Common myeloid progenitor, CD34-positive (primary cell): ENCODE measurements at regions of chr11 and their contacts with region 1.

Region 1: GRCh38 chr11:2420502-2421225 is 20.1 kb downstream of the TSSC4 start:
- DNase-seq: peak; percentile 71 to 84 (median 81)
- H3K4me3 ChIP-seq: no peak overlapping the region
- H3K27ac ChIP-seq: no peak overlapping the region
- H3K4me1 ChIP-seq: peaks cover 0 to 10% (median 9%) of the 10 kb centered on the region in 4 experiments
- H3K27me3 ChIP-seq: no peaks in the 10 kb centered on the region

Region 2: GRCh38 chr11:2166091-2166851 is 254.4 kb before region 1 on chr11:
- CTCF ChIA-PET with region 1: interaction called, 45 read pairs
- POLR2A ChIA-PET with region 1: interaction called, 3 read pairs
- DNase-seq: peak; percentile 28 to 51 (median 42)
- H3K4me3 ChIP-seq: peak overlapping the region in 1 of 7 experiments; percentile 26
- H3K27ac ChIP-seq: no peak overlapping the region
- H3K4me1 ChIP-seq: peaks cover 0 to 7% (median 3%) of the 10 kb centered on the region in 4 experiments
- H3K27me3 ChIP-seq: peaks cover 0 to 35% (median 5%) of the 10 kb centered on the region in 5 experiments

Region 3: DNA sequence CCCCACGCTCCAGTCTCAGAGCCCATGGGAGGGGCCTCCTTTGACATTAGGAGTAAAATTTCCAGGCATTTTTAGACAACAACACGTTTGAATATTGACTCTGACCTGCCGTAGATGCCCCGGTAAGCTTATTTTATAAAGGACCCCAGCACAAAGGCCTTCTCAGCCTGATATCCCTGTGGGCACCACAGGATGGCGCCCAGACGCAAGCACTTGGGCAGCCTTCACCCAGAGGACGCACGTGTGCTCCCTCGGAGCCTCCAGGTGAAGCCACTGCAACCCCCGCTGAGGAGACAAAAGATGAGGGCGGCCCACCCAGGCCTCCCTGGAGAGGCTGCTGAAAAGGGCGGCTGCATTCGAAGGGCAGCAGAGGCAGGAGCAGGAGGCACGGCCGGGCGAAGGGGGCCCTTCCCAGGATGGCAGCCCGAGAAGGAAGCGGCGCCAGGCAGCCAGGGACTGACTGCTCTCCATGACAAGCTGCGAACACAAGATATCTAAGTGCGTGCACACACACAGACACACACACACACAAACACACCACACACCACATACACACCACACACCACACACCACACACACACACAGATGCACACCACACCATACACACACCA is 233.9 kb before region 1 on chr11:
- CTCF ChIA-PET with region 1: interaction called, 82 read pairs
- POLR2A ChIA-PET with region 1: no interaction called
- DNase-seq: peak; percentile 84 to 90 (median 89)
- H3K4me3 ChIP-seq: peak overlapping the region in 1 of 7 experiments; percentile 40
- H3K27ac ChIP-seq: no peak overlapping the region
- H3K4me1 ChIP-seq: peaks cover 5 to 41% (median 24%) of the 10 kb centered on the region in 4 experiments
- H3K27me3 ChIP-seq: no peaks in the 10 kb centered on the region

Region 4: GRCh38 chr11:2196970-2197770 is 223.5 kb before region 1 on chr11:
- CTCF ChIA-PET with region 1: interaction called, 42 read pairs
- POLR2A ChIA-PET with region 1: no interaction called
- DNase-seq: peak; percentile 62 to 76 (median 73)
- H3K4me3 ChIP-seq: no peak overlapping the region
- H3K27ac ChIP-seq: no peak overlapping the region
- H3K4me1 ChIP-seq: peaks cover 0 to 27% (median 14%) of the 10 kb centered on the region in 4 experiments
- H3K27me3 ChIP-seq: peaks cover 0 to 2% (median 0%) of the 10 kb centered on the region in 5 experiments

Region 5: GRCh38 chr11:2400069-2400760 is 20.4 kb before region 1 on chr11 and contains the start of gene TSSC4:
- CTCF ChIA-PET with region 1: interaction called, 73 read pairs
- POLR2A ChIA-PET with region 1: interaction called, 3 read pairs
- DNase-seq: peak; percentile 100
- H3K4me3 ChIP-seq: peak within 1 kb of the TSS; percentile 90 to 100 (median 99)
- H3K27ac ChIP-seq: peak within 1 kb of the TSS; percentile 96 to 97
- H3K4me1 ChIP-seq: peaks cover 0 to 26% (median 25%) of the 10 kb centered on the region in 4 experiments
- H3K27me3 ChIP-seq: no peaks in the 10 kb centered on the region

Region 6: GRCh38 chr11:2409611-2410468 is 10.8 kb before region 1 on chr11:
- CTCF ChIA-PET with region 1: interaction called, 73 read pairs
- POLR2A ChIA-PET with region 1: no interaction called
- DNase-seq: no peak
- H3K4me3 ChIP-seq: no peak overlapping the region
- H3K27ac ChIP-seq: no peak overlapping the region
- H3K4me1 ChIP-seq: peaks cover 0 to 9% (median 0%) of the 10 kb centered on the region in 4 experiments
- H3K27me3 ChIP-seq: no peaks in the 10 kb centered on the region